ENCODE measurements at regions of chr5 and their contacts with region 1.

Region 1: GRCh38 chr5:157476702-157477408 is 16.8 kb downstream of the NIPAL4 start:
- DNase-seq: peak; percentile 74
- ATAC-seq: peak; percentile 76
- H3K4me3 ChIP-seq: no peak overlapping the region
- H3K27ac ChIP-seq: no peak overlapping the region
- H3K4me1 ChIP-seq: peaks cover 9% of the 10 kb centered on the region; the same call in 1 of the 2 replicates
- H3K27me3 ChIP-seq: no peaks in the 10 kb centered on the region
- CTCF ChIP-seq: peak; percentile 88
- POLR2A ChIP-seq: 0 out of 2 replicates have a peak, but pooled peaks have one; percentile 34
- RAD21 ChIP-seq: peak; percentile 87

Region 2: DNA sequence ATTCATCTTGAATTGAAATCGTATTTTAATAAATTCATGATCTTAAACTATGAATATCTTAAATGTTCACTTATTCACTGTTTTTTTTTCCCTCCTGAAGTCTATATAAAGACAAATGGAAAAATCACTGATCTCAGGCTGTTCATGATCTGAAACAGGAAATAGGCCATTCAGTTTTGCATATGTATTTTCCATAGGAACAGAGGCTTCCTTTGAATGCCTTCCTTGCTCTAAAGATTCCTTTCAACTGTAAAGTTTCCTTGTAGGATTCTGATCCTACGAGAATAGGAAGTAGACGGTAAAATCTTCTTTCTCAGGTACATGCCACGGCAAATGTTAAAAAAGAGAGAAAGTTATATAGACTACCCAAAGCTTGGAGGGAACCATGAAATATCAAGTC is 821.1 kb before region 1 on chr5:
- CTCF ChIA-PET with region 1: no interaction called
- POLR2A ChIA-PET with region 1: no interaction called
- dilution Hi-C with region 1: no loop called
- in situ Hi-C with region 1: no loop called
- intact Hi-C with region 1: no loop called
- DNase-seq: no peak
- ATAC-seq: no peak
- H3K4me3 ChIP-seq: no peak overlapping the region
- H3K27ac ChIP-seq: no peak overlapping the region
- H3K4me1 ChIP-seq: no peaks in the 10 kb centered on the region
- H3K27me3 ChIP-seq: no peaks in the 10 kb centered on the region
- CTCF ChIP-seq: no peak
- POLR2A ChIP-seq: no peak
- RAD21 ChIP-seq: no peak

Region 3: DNA sequence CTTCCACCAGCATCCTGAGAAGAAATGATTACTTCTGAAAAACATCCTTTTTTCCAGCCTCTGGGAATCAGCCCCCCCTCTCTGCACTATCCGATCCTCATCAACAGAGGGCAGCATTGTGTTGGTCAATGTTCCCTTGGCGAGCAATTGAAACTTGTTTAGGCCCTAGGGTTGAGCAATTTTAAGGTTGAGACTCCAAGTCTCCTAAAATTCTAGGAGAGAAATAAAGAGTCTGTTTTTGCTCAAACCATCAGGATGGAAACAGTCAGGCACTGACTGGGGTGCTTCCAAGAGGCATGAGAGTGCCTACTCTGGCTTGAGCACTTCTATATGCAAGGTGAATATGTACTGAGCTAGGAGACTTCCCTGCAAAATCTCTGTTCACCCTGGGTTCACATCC is 223.3 kb before region 1 on chr5:
- CTCF ChIA-PET with region 1: no interaction called
- POLR2A ChIA-PET with region 1: no interaction called
- dilution Hi-C with region 1: no loop called
- in situ Hi-C with region 1: no loop called
- intact Hi-C with region 1: loop called (anchors 5 kb)
- DNase-seq: peak; percentile 47
- ATAC-seq: peak; percentile 96
- H3K4me3 ChIP-seq: no peak overlapping the region
- H3K27ac ChIP-seq: no peak overlapping the region
- H3K4me1 ChIP-seq: no peaks in the 10 kb centered on the region; the same call in 1 of the 2 replicates
- H3K27me3 ChIP-seq: peaks cover 11% of the 10 kb centered on the region
- CTCF ChIP-seq: peak; percentile 93
- POLR2A ChIP-seq: no peak
- RAD21 ChIP-seq: peak; percentile 88

Region 4: DNA sequence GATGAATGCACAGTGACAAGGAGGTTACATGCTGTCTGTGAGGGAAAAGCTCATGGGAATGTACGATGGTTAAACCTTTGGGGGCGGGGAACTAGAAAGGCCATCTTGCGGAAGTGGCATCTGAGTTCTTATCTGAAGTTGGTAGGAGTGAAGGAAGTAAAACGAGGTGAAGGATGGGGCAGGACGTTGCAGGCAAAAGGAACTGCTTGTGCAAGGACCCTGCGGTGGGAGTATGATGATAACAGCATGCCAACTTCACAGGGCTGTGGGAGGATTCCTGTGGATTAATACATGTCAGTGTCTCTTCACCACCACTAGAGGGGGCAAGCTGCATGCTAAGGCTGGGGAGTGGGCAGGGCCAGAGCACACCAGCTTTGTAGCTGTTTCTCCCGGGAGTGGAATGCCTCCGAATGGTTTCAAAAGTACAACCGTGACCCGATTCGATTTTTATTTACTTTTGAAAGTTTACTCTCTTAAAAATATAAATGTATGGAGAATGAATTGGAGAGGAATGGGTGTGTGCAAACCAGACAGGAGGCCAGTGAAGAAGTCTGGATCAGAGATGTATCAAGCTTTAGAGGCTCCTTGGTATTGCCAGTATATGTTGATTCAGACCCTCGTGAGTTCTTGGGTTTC is 148.5 kb before region 1 on chr5:
- CTCF ChIA-PET with region 1: interaction called, 14 read pairs
- POLR2A ChIA-PET with region 1: no interaction called
- dilution Hi-C with region 1: no loop called
- in situ Hi-C with region 1: no loop called
- intact Hi-C with region 1: loop called (anchors 1 kb)
- DNase-seq: peak; percentile 81
- ATAC-seq: peak; percentile 100
- H3K4me3 ChIP-seq: peak overlapping the region; percentile 13; the same call in 1 of the 2 replicates
- H3K27ac ChIP-seq: no peak overlapping the region
- H3K4me1 ChIP-seq: no peaks in the 10 kb centered on the region
- H3K27me3 ChIP-seq: no peaks in the 10 kb centered on the region
- CTCF ChIP-seq: peak; percentile 97
- POLR2A ChIP-seq: peak; percentile 41; the same call in 1 of the 2 replicates
- RAD21 ChIP-seq: peak; percentile 98

Region 5: DNA sequence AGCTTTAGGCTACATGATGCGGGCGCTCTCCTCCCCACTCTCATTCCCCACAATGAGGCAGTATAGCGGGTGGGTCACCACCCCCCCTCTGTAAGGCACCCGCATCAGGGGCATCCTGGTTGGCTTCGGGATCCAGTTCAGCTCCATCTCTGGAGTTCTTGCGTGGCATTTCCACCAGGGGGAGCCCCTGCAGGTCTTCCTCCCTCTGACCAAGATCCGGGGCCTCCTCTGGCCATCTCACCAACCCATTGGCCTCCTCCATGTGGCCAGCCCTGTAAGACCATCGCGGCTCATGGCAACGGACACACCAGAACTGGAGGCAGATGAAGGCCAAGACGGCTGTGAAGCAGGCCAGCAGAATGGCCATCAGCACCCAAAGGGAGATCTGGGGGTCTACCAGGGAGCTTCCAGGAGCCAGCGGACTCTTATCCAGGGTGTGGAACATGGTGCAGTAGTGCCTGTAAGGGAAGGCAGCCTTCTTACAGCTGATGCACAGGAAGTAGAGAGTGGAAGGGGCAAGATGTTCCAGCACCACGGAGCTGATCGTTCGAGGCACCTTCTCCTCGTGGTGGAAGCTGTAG is 133.9 kb before region 1 on chr5:
- CTCF ChIA-PET with region 1: no interaction called
- POLR2A ChIA-PET with region 1: no interaction called
- dilution Hi-C with region 1: no loop called
- in situ Hi-C with region 1: no loop called
- intact Hi-C with region 1: loop called (anchors 2 kb)
- DNase-seq: no peak
- ATAC-seq: peak; percentile 67
- H3K4me3 ChIP-seq: no peak overlapping the region
- H3K27ac ChIP-seq: no peak overlapping the region
- H3K4me1 ChIP-seq: no peaks in the 10 kb centered on the region
- H3K27me3 ChIP-seq: no peaks in the 10 kb centered on the region; the same call in 1 of the 2 replicates
- CTCF ChIP-seq: peak; percentile 55
- POLR2A ChIP-seq: no peak
- RAD21 ChIP-seq: peak; percentile 43

Region 6: DNA sequence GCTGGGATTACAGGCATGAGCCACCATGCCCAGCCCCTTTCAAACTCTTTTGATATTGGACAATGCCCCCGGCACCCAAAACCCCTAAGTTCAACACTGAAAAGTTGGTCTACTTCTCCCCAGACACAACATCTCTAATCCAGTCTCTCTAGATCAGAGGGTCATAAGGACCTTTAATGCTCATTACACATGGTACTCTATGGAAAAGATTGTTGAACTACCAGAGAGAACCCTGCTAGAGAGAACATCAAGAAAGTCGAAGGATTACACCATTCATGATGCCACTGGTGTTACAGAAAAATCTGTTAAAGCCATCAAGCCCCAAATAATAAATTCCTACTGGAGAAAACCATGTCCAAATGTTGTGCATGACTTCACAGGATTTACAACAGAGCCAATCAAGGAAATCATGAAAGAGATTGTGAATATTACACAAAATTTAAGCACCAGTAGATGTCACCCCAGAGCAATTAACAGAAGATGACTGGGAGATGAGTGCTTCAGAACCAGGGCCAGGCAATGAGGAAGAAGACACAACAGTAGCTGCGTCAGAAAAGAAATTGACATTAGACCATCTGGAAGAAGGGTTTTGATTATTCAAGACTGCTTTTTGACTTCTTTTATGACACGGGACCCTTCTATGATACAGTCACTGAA is 45.2 kb before region 1 on chr5:
- CTCF ChIA-PET with region 1: interaction called, 5 read pairs
- POLR2A ChIA-PET with region 1: no interaction called
- dilution Hi-C with region 1: no loop called
- in situ Hi-C with region 1: no loop called
- intact Hi-C with region 1: loop called (anchors 2 kb)
- DNase-seq: peak; percentile 69
- ATAC-seq: peak; percentile 98
- H3K4me3 ChIP-seq: no peak overlapping the region
- H3K27ac ChIP-seq: no peak overlapping the region
- H3K4me1 ChIP-seq: no peaks in the 10 kb centered on the region
- H3K27me3 ChIP-seq: no peaks in the 10 kb centered on the region
- CTCF ChIP-seq: peak; percentile 59
- POLR2A ChIP-seq: no peak
- RAD21 ChIP-seq: peak; percentile 65

Region 7: GRCh38 chr5:157575381-157576020 is 98.6 kb after region 1 on chr5 and contains the start of gene ADAM19:
- CTCF ChIA-PET with region 1: no interaction called
- POLR2A ChIA-PET with region 1: no interaction called
- dilution Hi-C with region 1: no loop called
- in situ Hi-C with region 1: no loop called
- intact Hi-C with region 1: loop called (anchors 5 kb)
- DNase-seq: peak; percentile 53
- ATAC-seq: peak; percentile 84
- H3K4me3 ChIP-seq: peak within 1 kb of the TSS; percentile 80
- H3K27ac ChIP-seq: peak within 1 kb of the TSS; percentile 86
- H3K4me1 ChIP-seq: peaks cover 13% of the 10 kb centered on the region
- H3K27me3 ChIP-seq: no peaks in the 10 kb centered on the region
- CTCF ChIP-seq: no peak
- POLR2A ChIP-seq: peak; percentile 56
- RAD21 ChIP-seq: peak; percentile 3; the same call in 1 of the 2 replicates
- total RNA-seq, gene ADAM19: 35.5 and 38.3 TPM in 2 replicates